GM10248 (cell line): ENCODE measurements at regions of chr6 and their contacts with region 1.

Region 1: DNA sequence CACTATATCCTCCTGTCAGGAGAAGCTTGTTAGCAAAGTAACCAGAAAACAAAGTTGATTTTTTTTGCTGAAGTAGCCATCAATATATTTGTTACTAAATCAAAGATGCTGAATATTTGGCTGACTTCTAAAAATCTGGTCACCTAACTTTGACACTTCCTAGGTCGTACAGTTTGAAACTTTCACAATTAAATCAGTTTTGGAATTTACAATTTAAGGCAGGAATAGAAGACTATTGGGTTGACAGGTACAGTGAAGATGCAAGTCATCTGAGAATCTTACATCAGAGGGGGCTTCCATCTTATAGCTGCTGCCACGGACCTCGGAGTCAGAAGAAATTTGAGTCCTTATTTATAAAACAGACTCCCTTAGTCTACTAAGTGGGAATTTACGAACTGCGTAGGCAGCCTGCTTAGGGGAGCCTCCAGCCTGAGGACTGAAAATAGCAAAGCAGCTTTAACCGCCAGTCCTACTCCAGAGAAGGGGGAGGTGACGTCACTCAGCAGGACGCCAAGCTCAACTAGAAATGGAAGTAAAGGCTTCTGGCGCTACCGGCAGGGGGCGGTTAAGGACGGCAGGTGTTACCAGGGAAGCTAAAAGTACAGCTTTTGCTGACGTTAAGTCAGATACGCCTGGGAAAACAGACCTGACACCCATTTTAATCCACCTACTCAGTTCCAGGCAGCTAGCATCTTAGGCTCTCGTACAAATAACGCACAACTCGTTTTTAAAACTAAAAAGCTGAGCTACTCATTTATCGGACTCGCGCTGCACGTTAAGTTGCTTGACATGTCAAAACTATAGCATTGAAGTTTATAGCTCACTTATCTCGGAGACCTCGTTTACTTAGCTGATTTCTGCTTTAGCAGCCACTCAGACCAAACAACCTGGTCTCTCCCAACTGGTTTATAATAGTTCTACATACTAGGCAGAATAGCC is 61.1 kb upstream of the HFE start:
- DNase-seq: peak; percentile 62
- CTCF ChIP-seq: peak; percentile 78

Region 2: DNA sequence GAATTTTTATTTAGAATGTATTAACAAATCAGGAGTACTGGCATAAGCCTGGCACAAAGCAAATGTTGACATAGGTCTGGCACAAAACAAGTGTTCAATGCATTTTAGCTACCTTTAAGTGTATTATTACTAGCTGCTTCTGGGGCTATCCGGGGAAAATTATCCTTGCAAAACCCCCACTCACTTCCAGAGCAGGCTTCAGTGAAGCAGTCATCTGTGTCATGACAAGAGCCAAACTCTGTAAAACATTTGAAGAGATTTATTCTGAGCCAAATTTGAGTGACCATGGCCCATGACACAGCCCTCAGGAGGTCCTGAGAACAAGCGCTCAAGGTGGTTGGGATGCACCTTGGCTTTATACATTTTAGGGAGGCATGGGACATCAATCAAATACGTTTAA is 69.9 kb before region 1 on chr6:
- CTCF ChIA-PET with region 1: no interaction called
- POLR2A ChIA-PET with region 1: no interaction called
- DNase-seq: no peak
- CTCF ChIP-seq: no peak

Region 3: DNA sequence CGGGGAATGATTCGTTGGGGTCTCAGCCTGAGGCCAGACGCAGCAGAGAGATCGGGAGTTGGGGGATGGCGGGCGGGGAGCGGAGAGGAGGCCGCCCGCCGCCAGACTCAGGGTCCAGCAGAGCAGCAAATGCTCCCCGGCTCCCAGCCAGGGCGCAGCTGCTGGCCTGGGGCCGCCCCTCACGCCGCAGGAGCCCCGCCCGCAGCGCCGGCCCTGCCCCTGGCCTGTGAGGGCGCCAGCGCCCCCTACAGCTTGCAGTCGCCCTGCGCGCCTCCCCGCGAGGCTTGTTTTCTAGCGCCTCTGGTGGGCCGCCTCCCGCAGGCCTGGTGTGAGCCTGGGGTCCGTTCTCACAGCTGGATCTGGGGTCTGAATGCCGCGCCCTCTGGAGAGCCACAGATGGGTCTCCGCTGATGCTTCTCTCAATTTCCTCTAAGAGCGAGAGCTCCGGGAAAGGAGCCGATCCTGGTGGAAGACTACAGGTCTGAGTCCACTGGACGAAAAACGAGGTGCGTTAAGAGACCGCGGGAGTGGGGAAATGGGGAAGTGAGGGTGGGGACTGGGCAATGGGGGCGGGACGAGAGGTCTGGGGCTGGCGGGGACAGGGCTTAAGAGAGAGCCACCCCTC is 33.6 kb before region 1 on chr6:
- CTCF ChIA-PET with region 1: interaction called, 87 read pairs
- POLR2A ChIA-PET with region 1: interaction called, 51 read pairs
- DNase-seq: peak; percentile 93
- CTCF ChIP-seq: peak; percentile 100

Region 4: DNA sequence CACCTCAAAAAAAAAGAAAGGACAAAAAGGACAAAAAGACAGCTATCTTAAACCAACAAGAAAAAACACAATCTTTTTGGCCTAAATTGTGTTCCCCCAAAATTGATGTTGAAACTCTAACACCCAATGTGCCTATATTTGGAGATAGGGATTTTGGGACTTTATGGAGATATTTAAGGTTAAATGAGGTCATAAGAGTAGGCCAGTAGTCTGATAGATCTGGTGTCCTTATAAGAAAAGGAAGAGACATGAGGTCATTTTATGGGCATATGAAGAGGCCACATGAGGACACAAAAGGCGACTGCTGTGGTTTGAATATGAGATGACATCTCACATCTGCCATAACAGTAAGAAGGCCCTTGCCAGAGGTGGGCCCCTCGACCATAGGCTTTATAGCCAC is 14.1 kb before region 1 on chr6:
- CTCF ChIA-PET with region 1: interaction called, 23 read pairs
- POLR2A ChIA-PET with region 1: interaction called, 15 read pairs
- DNase-seq: no peak
- CTCF ChIP-seq: no peak

Region 5: GRCh38 chr6:26054857-26055669 is 28.9 kb after region 1 on chr6:
- CTCF ChIA-PET with region 1: interaction called, 32 read pairs
- POLR2A ChIA-PET with region 1: interaction called, 10 read pairs
- DNase-seq: peak; percentile 78
- CTCF ChIP-seq: peak; percentile 23

Region 6: GRCh38 chr6:26122793-26123674 is 96.9 kb after region 1 on chr6:
- CTCF ChIA-PET with region 1: interaction called, 7 read pairs
- POLR2A ChIA-PET with region 1: interaction called, 39 read pairs
- DNase-seq: peak; percentile 83
- CTCF ChIP-seq: no peak